Vagina (tissue), 2 donors: ENCODE measurements at regions of chr14 and their contacts with region 1.

Region 1: GRCh38 chr14:75011356-75011994 is 8.8 kb downstream of the EIF2B2 start:
- DNase-seq: no peak
- H3K4me3 ChIP-seq: no peak overlapping the region
- H3K27ac ChIP-seq: peak overlapping the region; percentile 60
- H3K4me1 ChIP-seq: peaks cover 8% of the 10 kb centered on the region
- H3K27me3 ChIP-seq: no peaks in the 10 kb centered on the region
- CTCF ChIP-seq: no peak
- POLR2A ChIP-seq: no peak

Region 2: DNA sequence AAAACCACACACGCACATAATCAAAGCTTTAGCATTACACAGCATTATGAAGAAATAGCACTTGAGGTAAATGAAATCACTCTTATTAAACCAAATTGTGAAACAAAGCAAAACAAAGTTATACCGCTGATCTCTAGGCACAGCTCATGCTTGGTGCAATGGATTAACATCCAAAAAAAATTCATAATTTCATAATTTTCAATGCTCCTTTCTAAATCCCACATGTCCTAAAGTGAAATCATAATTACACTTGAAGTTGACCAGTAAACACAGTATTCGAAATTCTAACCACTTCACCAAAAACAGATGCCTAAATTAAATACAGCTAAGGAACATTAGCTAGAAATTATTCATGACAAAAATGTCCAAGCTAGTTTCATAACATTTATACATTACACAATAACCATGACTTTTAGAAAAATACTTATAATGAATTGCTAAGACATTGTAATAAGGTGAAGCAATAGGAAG is 38.3 kb after region 1 on chr14:
- intact Hi-C with region 1: loop called (anchors 5 kb)
- DNase-seq: no peak
- H3K4me3 ChIP-seq: no peak overlapping the region
- H3K27ac ChIP-seq: peak overlapping the region; percentile 88
- H3K4me1 ChIP-seq: peaks cover 50% of the 10 kb centered on the region
- H3K27me3 ChIP-seq: no peaks in the 10 kb centered on the region
- CTCF ChIP-seq: no peak
- POLR2A ChIP-seq: no peak

Region 3: DNA sequence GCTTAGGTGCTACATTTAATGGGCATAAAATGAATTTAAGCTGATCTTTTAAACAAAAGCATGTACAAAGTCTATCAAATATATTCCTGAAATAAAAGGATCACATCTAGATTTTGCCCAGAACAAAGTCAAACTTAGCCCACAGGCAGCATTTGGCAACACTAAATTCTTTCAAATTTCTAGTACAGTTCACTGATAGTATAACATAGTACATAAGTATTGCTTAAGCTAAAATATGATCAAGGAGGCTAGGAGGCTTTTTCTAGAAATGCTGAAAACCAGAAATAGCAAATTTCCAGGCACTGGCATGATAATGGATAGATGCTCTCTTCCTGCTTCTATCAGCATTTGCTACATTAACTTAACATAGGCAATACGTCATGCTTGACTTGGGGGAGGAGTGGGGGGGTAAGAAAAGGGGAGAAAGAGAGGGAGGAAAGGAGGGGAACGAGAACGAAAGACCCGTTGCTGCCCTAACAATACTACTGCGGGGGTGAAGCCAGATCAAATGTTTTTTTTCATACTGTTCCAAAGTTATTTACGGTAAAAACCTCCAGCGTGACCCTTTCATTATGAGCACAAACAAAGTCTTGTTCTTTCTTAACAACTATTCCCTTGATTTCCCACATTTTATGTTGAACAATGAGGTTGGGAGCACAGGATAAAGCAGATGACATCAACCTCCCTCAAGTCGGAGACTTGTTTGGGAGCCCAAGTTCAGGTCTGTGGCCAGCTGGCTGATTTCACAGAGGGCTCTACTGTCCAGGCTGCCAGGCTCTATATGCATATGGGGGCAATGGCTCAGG is 154.3 kb after region 1 on chr14:
- intact Hi-C with region 1: no loop called
- DNase-seq: no peak
- H3K4me3 ChIP-seq: no peak overlapping the region
- H3K27ac ChIP-seq: peak overlapping the region; percentile 25
- H3K4me1 ChIP-seq: peaks cover 68% of the 10 kb centered on the region
- H3K27me3 ChIP-seq: no peaks in the 10 kb centered on the region
- CTCF ChIP-seq: no peak
- POLR2A ChIP-seq: no peak